Right cardiac atrium (tissue), 5 donors: ENCODE measurements at regions of chr15 and their contacts with region 1.

Region 1: DNA sequence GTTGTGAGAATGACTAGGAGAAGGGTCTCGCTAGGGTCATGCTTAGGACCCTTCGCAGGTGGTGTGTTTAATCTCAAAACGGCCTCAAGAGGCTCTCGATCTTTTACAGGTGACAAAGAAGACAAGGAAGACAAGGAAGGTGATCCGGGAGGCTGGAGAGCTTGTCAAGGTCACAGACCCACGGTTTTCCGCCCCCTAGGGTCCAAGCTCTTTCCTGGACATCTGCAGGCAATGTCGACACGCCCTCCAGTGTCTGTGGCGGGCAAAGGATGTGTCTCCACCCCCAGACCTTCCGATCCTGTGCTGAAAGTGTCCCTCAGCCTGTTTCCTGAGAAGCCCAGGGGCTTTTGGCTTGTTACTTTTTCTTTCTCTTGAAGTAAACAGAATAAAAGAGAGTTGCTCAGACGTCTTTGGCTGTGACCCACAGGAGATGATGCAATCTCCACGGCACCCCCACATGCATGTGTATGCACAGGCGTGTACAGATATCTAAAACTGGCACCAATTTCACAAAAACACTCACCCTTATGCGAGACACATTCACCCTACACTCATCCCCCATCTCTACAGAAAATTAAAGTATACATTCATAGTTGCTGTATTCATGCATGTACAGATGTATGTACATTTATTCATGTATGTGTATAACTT is 108.8 kb downstream of the KLF13 start:
- DNase-seq: peak; percentile 68 to 93 (median 90)
- ATAC-seq: peak; percentile 85 to 87
- H3K4me3 ChIP-seq: peak overlapping the region; percentile 6
- H3K27ac ChIP-seq: peak overlapping the region; percentile 71
- H3K4me1 ChIP-seq: peaks cover 4% of the 10 kb centered on the region
- H3K27me3 ChIP-seq: no peaks in the 10 kb centered on the region

Region 2: GRCh38 chr15:31200735-31201151 is 234.6 kb before region 1 on chr15:
- intact Hi-C with region 1: loop called in 1 of 4 experiments (anchors 5 kb)
- DNase-seq: peak; percentile 74 to 94 (median 91)
- ATAC-seq: peak; percentile 89 to 93
- H3K4me3 ChIP-seq: no peak overlapping the region
- H3K27ac ChIP-seq: no peak overlapping the region
- H3K4me1 ChIP-seq: peaks cover 4% of the 10 kb centered on the region
- H3K27me3 ChIP-seq: no peaks in the 10 kb centered on the region

Region 3: DNA sequence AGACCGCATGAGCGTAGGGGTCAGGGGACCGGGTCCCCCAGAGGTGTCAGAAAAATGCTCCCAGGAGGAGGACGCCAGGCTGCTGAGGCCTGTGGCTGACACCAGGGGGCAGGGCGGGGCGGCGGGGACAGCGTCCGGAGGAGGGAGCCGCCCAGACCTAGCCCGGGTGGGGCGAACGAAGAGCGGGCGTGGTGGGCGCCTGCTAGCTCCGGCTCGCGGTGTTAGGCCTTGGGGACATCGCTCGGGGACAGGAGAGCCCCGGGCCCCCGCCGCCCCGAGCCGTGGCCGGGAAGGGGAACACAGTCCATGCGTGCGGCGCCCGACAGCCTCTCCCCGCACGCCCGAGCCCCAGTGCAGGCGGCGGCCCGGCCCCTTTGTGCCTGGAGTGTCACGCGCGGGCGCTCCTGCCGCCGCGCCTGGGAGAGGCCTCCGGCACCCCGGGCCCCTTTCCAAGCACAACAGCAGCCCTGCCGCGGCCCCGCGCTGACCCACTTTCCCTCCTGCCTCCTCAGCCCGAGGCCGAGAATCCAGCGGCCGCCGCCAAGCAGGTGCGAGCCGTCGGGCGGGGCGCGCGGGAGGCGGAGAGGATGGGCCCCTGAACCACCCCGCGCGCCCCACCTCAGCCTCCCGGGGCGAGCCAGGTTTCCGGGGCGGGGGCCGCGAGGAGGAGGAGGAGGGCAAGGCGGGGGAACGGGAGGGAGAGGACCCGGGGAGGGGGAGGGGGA is 219.7 kb before region 1 on chr15:
- intact Hi-C with region 1: loop called in 1 of 4 experiments (anchors 5 kb)
- DNase-seq: peak; percentile 76 to 95 (median 95)
- ATAC-seq: peak; percentile 86 to 87
- H3K4me3 ChIP-seq: peak overlapping the region; percentile 55
- H3K27ac ChIP-seq: peak overlapping the region; percentile 53
- H3K4me1 ChIP-seq: peaks cover 4% of the 10 kb centered on the region
- H3K27me3 ChIP-seq: no peaks in the 10 kb centered on the region

Region 4: DNA sequence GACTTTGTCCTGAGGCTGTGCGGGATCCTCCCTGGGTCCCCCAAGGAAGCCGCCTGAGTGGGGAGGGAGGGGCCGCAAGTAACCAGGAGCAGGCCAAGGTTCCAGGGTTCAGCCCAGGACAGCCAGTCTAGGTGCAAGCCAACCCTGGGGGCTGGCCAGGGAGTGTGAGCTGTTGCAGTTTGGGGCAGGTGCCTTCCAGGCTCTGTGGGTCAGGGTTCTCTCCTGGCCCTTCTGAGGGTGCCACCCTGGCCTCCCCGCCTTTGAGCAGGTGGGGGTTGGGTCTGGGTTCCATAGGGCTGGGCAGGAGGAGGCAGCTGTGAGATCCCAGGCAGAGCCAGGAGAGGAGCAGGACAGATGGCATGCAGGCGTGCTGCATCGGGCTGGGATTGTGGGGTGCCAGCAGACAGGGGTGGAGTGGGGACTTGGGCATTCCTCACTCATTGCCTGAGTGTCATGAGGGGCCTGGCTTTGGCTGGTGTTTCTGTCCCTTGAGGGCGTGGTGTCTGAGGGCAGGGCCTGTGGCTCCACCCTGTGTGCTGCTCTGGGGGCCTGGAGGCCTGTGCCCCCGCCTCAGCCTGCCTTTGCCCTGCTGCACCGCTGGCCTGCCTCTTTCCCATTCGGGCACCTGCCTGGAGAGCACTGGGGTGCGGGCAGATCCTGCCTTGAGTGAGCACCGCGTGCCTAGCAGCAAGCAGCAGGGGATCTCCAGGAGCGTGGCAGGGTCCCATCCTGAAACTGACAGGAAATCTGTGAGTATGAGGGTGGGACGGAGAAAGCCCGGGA is 90.4 kb before region 1 on chr15:
- intact Hi-C with region 1: no loop called
- DNase-seq: peak; percentile 54 to 86 (median 81)
- ATAC-seq: peak; percentile 67 to 77
- H3K4me3 ChIP-seq: no peak overlapping the region
- H3K27ac ChIP-seq: peak overlapping the region; percentile 39
- H3K4me1 ChIP-seq: peaks cover 68% of the 10 kb centered on the region
- H3K27me3 ChIP-seq: no peaks in the 10 kb centered on the region

Region 5: DNA sequence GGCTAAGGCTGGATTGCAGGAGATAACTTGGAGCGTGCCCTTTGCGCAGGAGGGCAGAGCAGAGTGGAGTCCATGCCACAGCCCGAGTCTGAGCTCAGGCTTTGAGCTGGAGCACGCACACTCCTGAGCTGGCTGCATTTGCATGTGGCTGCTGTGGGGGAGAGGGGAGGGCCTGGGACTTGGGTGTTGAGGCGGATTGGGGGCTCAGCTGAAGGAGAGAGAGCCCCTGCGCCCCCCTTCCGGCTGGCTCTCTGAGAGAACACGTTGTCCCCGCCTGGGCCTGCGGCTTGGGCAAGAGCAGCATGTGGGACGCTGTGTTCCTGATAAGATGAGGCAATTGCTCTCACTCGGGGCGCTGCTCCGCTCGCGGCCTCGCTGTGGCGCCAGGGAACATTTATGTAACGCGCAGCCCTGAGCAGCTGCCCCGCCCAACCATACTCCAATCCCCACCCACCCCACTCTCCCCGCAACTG is 69.7 kb before region 1 on chr15:
- intact Hi-C with region 1: loop called in 1 of 4 experiments (anchors 10 kb)
- DNase-seq: peak; percentile 91 to 99 (median 98)
- ATAC-seq: peak; percentile 93
- H3K4me3 ChIP-seq: peak overlapping the region; percentile 30
- H3K27ac ChIP-seq: peak overlapping the region; percentile 98
- H3K4me1 ChIP-seq: peaks cover 49% of the 10 kb centered on the region
- H3K27me3 ChIP-seq: no peaks in the 10 kb centered on the region

Region 6: DNA sequence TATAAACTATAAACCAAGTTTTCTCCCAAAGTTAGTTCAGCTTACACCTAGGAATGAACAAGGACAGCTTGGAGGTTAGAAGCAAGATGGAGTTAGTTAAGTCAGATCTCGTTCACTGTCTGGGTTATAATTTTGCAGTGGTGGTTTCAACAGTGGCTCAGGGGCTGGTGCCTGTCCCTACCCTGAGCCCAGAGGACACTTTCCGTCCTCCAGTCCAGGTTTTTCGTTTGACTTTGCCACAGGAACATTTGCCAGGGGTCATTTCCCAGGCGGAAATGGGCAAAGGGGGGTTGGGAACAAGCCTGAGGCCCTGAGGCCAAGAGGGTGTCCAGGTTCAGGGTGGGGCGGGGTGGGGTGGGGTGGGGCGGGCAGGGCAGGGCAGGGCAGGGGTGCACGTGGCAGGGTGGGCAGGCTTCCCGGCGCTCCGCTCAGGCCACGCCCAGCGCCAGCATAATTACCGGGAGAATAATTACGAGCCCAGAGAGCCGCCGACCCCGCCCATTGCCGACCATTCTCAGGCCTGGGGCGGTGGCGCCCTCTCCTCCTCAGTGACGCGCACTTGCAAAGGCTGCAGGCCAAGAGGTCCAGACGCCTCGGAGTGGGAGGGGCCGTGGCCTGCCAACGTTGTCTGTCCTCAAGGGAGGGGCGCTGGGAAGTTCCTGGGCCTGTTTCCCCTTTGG is 38.4 kb before region 1 on chr15:
- intact Hi-C with region 1: loop called in 2 of 4 experiments (anchors 5 kb)
- DNase-seq: peak; percentile 92 to 99 (median 98)
- ATAC-seq: peak; percentile 93 to 95
- H3K4me3 ChIP-seq: no peak overlapping the region
- H3K27ac ChIP-seq: peak overlapping the region; percentile 92
- H3K4me1 ChIP-seq: peaks cover 13% of the 10 kb centered on the region
- H3K27me3 ChIP-seq: no peaks in the 10 kb centered on the region

Region 7: GRCh38 chr15:31402511-31403056 is 32.8 kb before region 1 on chr15:
- intact Hi-C with region 1: loop called in 2 of 4 experiments (anchors 5 kb)
- DNase-seq: peak; percentile 77 to 94 (median 94)
- ATAC-seq: peak; percentile 84
- H3K4me3 ChIP-seq: no peak overlapping the region
- H3K27ac ChIP-seq: peak overlapping the region; percentile 50
- H3K4me1 ChIP-seq: peaks cover 11% of the 10 kb centered on the region
- H3K27me3 ChIP-seq: no peaks in the 10 kb centered on the region